Activated CD4-positive, alpha-beta T cell treated with anti-CD3 and anti-CD28 coated beads for 36 hours (primary cell): ENCODE measurements at regions of chr18 and their contacts with region 1.

Region 1: GRCh38 chr18:70491734-70492348 is 203.0 kb downstream of the SOCS6 start:
- DNase-seq: peak; percentile 74
- ATAC-seq: peak; percentile 71
- H3K4me3 Mint-ChIP-seq: no peak overlapping the region
- H3K27ac Mint-ChIP-seq: no peak overlapping the region
- H3K4me1 Mint-ChIP-seq: peaks cover 2% of the 10 kb centered on the region
- H3K27me3 Mint-ChIP-seq: peaks cover 2% of the 10 kb centered on the region

Region 2: GRCh38 chr18:70506511-70506910 is 14.7 kb after region 1 on chr18:
- CTCF ChIA-PET with region 1: interaction called, 14 read pairs
- POLR2A ChIA-PET with region 1: no interaction called
- intact Hi-C with region 1: no loop called
- DNase-seq: no peak
- ATAC-seq: no peak
- H3K4me3 Mint-ChIP-seq: no peak overlapping the region
- H3K27ac Mint-ChIP-seq: no peak overlapping the region
- H3K4me1 Mint-ChIP-seq: no peaks in the 10 kb centered on the region
- H3K27me3 Mint-ChIP-seq: peaks cover 1% of the 10 kb centered on the region

Region 3: GRCh38 chr18:70720607-70721006 is 228.8 kb after region 1 on chr18:
- CTCF ChIA-PET with region 1: no interaction called
- POLR2A ChIA-PET with region 1: no interaction called
- intact Hi-C with region 1: no loop called
- DNase-seq: no peak
- ATAC-seq: no peak
- H3K4me3 Mint-ChIP-seq: no peak overlapping the region
- H3K27ac Mint-ChIP-seq: no peak overlapping the region
- H3K4me1 Mint-ChIP-seq: no peaks in the 10 kb centered on the region
- H3K27me3 Mint-ChIP-seq: no peaks in the 10 kb centered on the region

Region 4: GRCh38 chr18:71784777-71785176 is 1292.9 kb after region 1 on chr18:
- CTCF ChIA-PET with region 1: no interaction called
- POLR2A ChIA-PET with region 1: no interaction called
- intact Hi-C with region 1: loop called in 1 of 2 experiments (anchors 2 kb)
- DNase-seq: peak; percentile 24
- ATAC-seq: no peak
- H3K4me3 Mint-ChIP-seq: no peak overlapping the region
- H3K27ac Mint-ChIP-seq: no peak overlapping the region
- H3K4me1 Mint-ChIP-seq: no peaks in the 10 kb centered on the region
- H3K27me3 Mint-ChIP-seq: no peaks in the 10 kb centered on the region

Region 5: GRCh38 chr18:72086421-72086820 is 1594.6 kb after region 1 on chr18:
- CTCF ChIA-PET with region 1: no interaction called
- POLR2A ChIA-PET with region 1: no interaction called
- intact Hi-C with region 1: loop called in 1 of 2 experiments (anchors 5 kb)
- DNase-seq: no peak
- ATAC-seq: peak; percentile 33
- H3K4me3 Mint-ChIP-seq: no peak overlapping the region
- H3K27ac Mint-ChIP-seq: no peak overlapping the region
- H3K4me1 Mint-ChIP-seq: no peaks in the 10 kb centered on the region
- H3K27me3 Mint-ChIP-seq: no peaks in the 10 kb centered on the region